ENCODE measurements at regions of chr16 and their contacts with region 1.

Region 1: DNA sequence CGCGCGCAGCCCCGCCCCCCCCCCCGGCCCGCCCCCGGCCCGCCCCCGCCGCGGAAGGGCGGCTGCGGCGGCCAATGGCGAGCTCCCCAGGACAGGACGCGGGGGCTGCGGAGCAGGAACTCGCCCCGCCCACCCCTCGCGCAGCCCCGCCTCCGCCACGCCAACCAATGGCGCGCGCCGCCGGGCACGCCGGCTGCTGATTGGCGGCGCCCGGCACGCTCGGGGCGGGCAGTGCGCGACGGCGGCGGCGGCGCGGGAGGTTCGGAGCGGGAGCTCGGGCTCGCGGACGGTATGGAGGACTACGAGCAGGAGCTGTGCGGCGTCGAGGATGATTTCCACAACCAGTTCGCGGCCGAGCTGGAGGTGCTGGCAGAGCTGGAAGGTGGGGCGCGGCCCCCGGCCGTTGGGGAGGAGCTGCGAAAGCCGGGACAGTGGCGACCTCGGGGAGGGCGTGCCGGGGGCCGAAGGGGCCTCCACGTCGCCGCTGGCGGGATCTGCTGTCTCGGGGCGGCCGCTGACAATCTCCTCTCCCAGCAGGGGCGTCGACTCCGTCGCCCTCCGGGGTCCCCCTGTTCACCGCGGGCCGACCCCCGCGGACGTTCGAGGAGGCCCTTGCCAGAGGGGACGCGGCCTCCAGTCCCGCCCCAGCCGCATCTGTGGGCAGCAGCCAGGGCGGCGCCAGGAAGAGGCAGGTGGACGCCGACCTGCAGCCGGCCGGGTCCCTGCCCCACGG is at the start of gene CHTF18:
- DNase-seq: peak; percentile 94
- ATAC-seq: peak; percentile 94
- H3K4me3 Mint-ChIP-seq: peak within 1 kb of the TSS; percentile 90
- H3K27ac Mint-ChIP-seq: peak within 1 kb of the TSS; percentile 85
- H3K4me1 Mint-ChIP-seq: peaks cover 23% of the 10 kb centered on the region
- H3K27me3 Mint-ChIP-seq: no peaks in the 10 kb centered on the region
- total RNA-seq, gene CHTF18: 102 to 126 TPM

Region 2: DNA sequence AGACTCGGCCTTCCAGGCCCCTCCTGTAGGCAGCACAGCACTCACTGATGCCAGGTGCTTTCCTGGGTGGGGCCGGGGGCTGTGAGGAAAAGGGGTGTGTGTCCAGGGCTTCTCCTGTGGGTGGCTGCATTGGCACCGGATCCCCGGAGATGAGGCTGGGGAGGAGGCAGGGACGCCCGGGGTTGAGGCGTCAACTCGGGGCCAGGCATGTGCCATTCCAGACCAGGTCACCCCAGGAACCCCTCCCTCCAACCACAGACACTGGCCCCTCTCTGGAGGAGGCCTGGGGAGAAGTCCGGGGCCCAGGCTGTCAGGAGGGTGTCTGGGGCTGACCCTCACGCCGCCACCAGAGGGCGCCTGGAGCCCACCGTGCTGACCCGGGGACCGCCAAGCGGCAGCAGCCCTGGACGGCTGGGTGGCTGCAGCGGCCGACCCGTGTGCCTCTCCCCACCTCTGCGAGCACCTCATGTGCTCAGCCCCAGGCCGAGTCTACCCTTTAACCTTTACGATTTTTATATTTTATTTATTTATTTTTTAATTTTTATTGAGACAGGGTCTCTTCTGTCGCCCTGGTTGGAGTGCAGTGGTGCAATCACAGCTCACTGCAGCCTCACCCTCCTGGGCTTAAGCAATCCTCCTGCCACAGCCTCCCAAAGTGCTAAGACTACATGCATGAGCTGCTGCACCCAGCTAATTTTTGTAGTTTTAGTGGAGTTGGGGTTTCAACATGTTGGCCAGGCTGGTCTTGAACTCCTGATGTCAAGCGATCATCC is 76.8 kb before region 1 on chr16:
- CTCF ChIA-PET with region 1: interaction called, 51 read pairs
- POLR2A ChIA-PET with region 1: no interaction called
- DNase-seq: peak; percentile 85
- ATAC-seq: peak; percentile 65
- H3K4me3 Mint-ChIP-seq: no peak overlapping the region
- H3K27ac Mint-ChIP-seq: no peak overlapping the region
- H3K4me1 Mint-ChIP-seq: peaks cover 11% of the 10 kb centered on the region
- H3K27me3 Mint-ChIP-seq: peaks cover 24% of the 10 kb centered on the region